GM10248 (cell line): ENCODE measurements at regions of chr6 and their contacts with region 1.

Region 1: GRCh38 chr6:31729515-31729978 is 448 bp upstream of the DDAH2 start:
- DNase-seq: peak; percentile 79
- CTCF ChIP-seq: peak; percentile 87

Region 2: DNA sequence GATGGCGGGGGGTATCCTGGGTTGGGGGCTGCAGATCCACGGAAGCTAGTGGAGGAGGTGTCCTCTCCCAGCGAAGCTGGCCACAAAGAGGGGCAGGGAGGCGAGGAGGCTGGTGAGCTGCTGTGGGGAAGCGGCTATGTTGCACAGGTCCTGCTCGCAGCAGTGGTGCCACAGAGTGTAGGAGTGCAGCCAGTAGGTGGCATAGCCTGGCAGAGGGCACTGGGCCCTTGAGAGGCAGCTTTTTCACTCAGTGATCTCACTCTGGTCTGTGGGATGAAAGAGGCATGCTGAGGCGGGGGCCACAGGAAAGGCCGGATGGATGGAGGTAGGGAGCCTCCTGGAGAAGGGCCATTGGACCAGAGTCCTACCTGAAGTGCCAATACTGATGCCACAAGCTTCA is 17.3 kb before region 1 on chr6:
- CTCF ChIA-PET with region 1: interaction called, 21 read pairs
- POLR2A ChIA-PET with region 1: interaction called, 5 read pairs
- DNase-seq: no peak
- CTCF ChIP-seq: no peak

Region 3: GRCh38 chr6:31739639-31740396 is 10.3 kb after region 1 on chr6 and contains the start of gene MSH5:
- CTCF ChIA-PET with region 1: interaction called, 64 read pairs
- POLR2A ChIA-PET with region 1: interaction called, 6 read pairs
- DNase-seq: peak; percentile 97
- CTCF ChIP-seq: no peak

Region 4: DNA sequence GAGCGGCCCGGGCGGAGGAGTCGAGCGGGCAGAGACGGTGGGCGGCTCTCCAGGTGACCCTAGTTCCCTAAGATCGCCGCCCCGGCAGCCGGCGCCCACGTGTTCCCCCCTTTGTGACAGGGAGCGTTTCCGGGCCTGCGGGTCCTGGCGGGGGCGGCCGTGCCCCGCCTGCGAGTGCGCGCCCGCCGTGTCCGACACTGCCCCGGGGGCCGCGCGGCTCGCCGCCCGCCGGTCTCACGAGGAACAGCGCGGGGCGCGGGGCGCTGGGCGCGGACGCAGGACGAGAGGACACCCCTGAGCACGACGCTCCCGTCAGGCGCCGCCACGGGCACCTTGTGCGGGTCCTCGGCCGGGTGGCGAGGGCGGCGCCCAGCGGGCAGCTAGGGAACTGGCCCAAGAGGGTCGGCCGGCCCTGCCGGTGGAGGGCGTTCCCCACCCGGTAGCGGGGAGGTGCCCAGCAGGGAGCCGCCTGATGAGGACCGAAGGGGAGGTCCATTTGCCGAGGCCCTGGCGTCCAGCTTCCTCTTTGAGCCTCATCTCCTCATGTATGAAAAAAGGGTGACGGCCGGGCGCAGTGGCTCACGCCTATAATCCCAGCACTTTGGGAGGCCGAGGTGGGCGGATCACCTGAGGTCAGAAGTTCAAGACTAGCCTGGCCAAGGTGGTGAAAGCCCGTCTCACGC is 66.2 kb after region 1 on chr6 and contains the start of gene VARS1:
- CTCF ChIA-PET with region 1: interaction called, 11 read pairs
- POLR2A ChIA-PET with region 1: no interaction called
- DNase-seq: peak; percentile 97
- CTCF ChIP-seq: peak; percentile 86

Region 5: DNA sequence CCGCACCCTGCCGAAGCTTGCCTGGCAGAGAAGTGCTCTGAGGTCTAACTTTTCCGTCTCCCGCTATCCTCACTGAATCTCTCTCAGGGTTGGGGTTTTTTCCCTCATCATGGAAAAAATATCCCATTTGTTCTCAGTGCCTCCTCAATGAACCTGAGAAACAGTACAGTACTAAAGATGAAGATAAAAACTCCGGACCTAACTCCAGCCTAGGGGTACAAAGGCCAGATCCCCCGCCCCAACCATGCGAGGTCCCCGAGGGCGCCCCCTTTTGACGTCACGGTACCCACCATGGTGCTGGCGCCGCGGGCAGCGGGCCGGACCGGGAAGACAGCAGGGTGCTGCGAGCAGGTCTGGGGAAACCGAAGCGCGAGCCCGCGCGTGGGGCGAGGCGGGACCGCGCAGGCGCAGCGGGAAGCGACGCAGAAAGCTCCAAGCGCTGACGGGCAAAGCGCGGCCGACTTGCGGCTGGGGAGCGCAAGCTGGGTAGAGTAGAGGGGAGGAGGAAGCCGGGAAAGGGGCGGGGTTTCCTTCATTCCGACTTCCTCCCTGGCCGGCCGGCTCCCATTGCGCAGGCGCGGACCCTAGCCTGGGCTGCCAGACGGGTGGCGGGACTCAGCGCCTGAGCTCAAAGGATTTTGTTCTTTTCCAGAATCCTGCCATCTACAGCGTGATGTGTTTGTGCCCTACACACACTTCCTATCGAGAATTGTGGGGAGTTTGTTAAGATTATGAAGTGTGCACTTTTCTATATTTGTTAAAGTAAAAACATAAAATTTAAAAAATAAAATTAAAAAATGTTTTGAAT is 77.1 kb after region 1 on chr6 and contains the start of gene LSM2:
- CTCF ChIA-PET with region 1: interaction called, 12 read pairs
- POLR2A ChIA-PET with region 1: no interaction called
- DNase-seq: peak; percentile 100
- CTCF ChIP-seq: peak; percentile 39